Activated naive CD8-positive, alpha-beta T cell treated with anti-CD3 and anti-CD28 coated beads, Interleukin-2, amount 10 ng/mL, durations not matched to agents 7 days and 5 days (primary cell): ENCODE measurements at regions of chr10 and their contacts with region 1.

Region 1: DNA sequence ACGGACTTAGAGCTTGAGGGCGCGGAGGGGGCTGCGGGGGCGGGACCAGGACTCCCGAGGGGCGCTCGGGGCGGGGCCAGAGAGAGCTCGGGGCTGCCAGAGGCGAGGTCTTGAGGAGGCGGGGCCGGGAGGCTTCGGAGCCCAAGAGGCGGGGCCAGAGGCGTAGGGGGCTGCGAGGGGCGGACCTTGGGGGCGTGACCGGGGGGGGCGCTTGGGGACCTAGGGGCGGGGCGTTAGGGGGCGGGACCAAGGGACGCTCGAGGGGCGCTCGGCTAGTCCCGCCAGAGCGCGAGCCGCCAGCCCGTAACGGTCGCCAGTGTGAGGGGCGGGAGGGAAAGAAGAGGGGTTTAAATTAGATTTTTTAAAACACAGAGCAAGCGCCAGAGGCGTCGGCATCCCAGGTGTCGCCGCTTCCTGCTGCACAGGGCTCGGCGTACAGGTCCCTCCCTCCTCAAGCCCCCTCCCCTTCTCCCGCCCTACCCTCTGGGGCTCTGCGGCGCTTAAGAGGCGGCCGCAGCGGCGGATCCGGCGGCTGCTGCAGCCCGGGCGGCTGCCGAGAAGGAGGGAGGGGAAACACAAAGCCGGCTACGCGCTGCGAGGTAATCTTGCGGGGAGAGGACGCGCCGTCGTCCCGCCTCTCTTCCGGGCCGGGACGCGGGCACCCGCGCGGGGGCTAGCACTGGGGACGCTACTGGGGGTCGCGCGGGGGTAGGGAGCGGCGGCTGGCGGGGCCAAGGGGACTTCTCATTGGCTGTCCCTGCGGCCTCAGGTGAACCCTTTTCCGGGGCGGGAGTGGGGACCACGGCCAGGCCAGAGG is at the start of gene ADD3:
- DNase-seq: peak; percentile 94
- ATAC-seq: peak; percentile 65
- H3K4me3 Mint-ChIP-seq: no peak within 1 kb of the TSS
- H3K27ac Mint-ChIP-seq: peak within 1 kb of the TSS; percentile 94
- H3K4me1 Mint-ChIP-seq: peaks cover 36% of the 10 kb centered on the region
- H3K27me3 Mint-ChIP-seq: no peaks in the 10 kb centered on the region
- total RNA-seq, gene ADD3: 212 to 227 TPM

Region 2: GRCh38 chr10:110067960-110068770 is 60.3 kb after region 1 on chr10:
- POLR2A ChIA-PET with region 1: interaction called, 49 read pairs
- DNase-seq: no peak
- ATAC-seq: peak; percentile 93
- H3K4me3 Mint-ChIP-seq: peak overlapping the region; percentile 77
- H3K27ac Mint-ChIP-seq: peak overlapping the region; percentile 88
- H3K4me1 Mint-ChIP-seq: peaks cover 67% of the 10 kb centered on the region
- H3K27me3 Mint-ChIP-seq: no peaks in the 10 kb centered on the region

Region 3: GRCh38 chr10:110076559-110077318 is 68.8 kb after region 1 on chr10:
- POLR2A ChIA-PET with region 1: interaction called, 32 read pairs
- DNase-seq: no peak
- ATAC-seq: peak; percentile 73
- H3K4me3 Mint-ChIP-seq: peak overlapping the region; percentile 94
- H3K27ac Mint-ChIP-seq: peak overlapping the region; percentile 95
- H3K4me1 Mint-ChIP-seq: peaks cover 73% of the 10 kb centered on the region
- H3K27me3 Mint-ChIP-seq: no peaks in the 10 kb centered on the region